Activated CD4-positive, alpha-beta T cell treated with anti-CD3 and anti-CD28 coated beads for 36 hours (primary cell): ENCODE measurements at regions of chr14 and their contacts with region 1.

Region 1: DNA sequence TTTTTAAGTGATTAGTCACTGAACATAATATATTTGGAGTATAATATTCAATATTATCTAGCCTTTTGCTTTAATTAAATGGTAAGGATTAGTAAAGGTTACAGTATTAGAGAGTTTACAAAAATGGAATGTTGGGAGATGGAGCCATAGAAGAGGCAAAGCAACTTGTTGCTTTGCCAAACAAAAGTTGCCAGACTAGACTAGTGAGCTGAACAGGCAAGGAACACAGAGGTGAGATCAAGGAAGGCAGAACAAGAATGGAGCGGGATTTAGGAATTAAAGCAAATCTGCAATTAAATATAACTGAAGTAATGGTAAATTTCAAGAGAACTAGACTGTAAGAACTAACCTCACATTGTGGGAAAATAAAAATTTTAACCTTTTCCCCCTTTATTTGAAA is 5.1 kb downstream of the ARF6 start:
- DNase-seq: no peak
- ATAC-seq: no peak
- H3K4me3 Mint-ChIP-seq: peak overlapping the region; percentile 91
- H3K27ac Mint-ChIP-seq: peak overlapping the region; percentile 98
- H3K4me1 Mint-ChIP-seq: peaks cover 32% of the 10 kb centered on the region
- H3K27me3 Mint-ChIP-seq: no peaks in the 10 kb centered on the region

Region 2: GRCh38 chr14:49820176-49820575 is 77.8 kb before region 1 on chr14:
- CTCF ChIA-PET with region 1: no interaction called
- POLR2A ChIA-PET with region 1: no interaction called
- intact Hi-C with region 1: no loop called
- DNase-seq: no peak
- ATAC-seq: no peak
- H3K4me3 Mint-ChIP-seq: no peak overlapping the region
- H3K27ac Mint-ChIP-seq: no peak overlapping the region
- H3K4me1 Mint-ChIP-seq: no peaks in the 10 kb centered on the region
- H3K27me3 Mint-ChIP-seq: no peaks in the 10 kb centered on the region

Region 3: GRCh38 chr14:49977126-49977841 is 79.3 kb after region 1 on chr14:
- CTCF ChIA-PET with region 1: interaction called, 3 read pairs
- POLR2A ChIA-PET with region 1: interaction called, 16 read pairs
- intact Hi-C with region 1: loop called in 1 of 2 experiments (anchors 1 kb)
- DNase-seq: peak; percentile 62
- ATAC-seq: peak; percentile 73
- H3K4me3 Mint-ChIP-seq: peak overlapping the region; percentile 52
- H3K27ac Mint-ChIP-seq: peak overlapping the region; percentile 94
- H3K4me1 Mint-ChIP-seq: peaks cover 90% of the 10 kb centered on the region
- H3K27me3 Mint-ChIP-seq: no peaks in the 10 kb centered on the region